WTC11 (cell line): ENCODE measurements at regions of chr6 and their contacts with region 1.

Region 1: DNA sequence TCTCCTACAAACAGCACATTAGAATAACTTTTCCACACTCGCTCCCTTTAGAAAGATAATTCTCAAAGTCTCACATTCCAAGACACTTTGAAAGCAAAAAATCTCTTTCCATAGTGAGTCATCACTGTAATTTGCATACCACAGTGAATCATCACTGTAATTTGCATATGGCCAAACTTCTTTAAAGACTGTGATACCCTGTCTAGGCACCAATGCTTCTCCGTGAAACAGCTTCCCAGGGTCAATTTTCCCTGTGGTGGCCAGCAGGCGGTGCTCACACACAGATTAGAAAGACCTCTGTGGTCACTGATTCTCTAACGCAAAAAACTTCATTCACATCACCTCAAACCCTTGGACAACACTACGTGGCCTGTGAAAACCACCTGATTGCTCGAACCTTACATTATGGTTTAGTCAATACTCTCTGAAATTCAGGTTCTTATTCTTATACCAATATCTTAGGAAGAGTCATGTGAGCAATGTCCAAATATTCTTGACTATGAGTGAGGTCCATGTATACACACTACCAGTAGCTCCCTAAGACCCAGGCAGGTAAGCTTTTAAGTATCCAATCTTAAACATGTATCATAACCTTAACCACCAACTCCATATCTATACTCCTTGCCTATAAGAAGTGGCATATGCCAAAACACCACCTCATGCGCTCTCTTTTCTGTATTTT is 78.5 kb upstream of the PHACTR1 start:
- DNase-seq: peak; percentile 79
- ATAC-seq: peak; percentile 93
- H3K4me3 Mint-ChIP-seq: no peak overlapping the region
- H3K27ac Mint-ChIP-seq: no peak overlapping the region
- H3K4me1 Mint-ChIP-seq: peaks cover 3% of the 10 kb centered on the region; the same call in 1 of the 2 replicates
- H3K27me3 Mint-ChIP-seq: no peaks in the 10 kb centered on the region; the same call in 1 of the 2 replicates
- CTCF ChIP-seq: peak; percentile 89

Region 2: GRCh38 chr6:12528581-12529363 is 109.3 kb before region 1 on chr6:
- CTCF ChIA-PET with region 1: no interaction called
- POLR2A ChIA-PET with region 1: no interaction called
- DNase-seq: no peak
- ATAC-seq: no peak
- H3K4me3 Mint-ChIP-seq: no peak overlapping the region
- H3K27ac Mint-ChIP-seq: no peak overlapping the region
- H3K4me1 Mint-ChIP-seq: peaks cover 21% of the 10 kb centered on the region
- H3K27me3 Mint-ChIP-seq: no peaks in the 10 kb centered on the region; the same call in 1 of the 2 replicates
- CTCF ChIP-seq: no peak

Region 3: GRCh38 chr6:12557765-12558164 is 80.3 kb before region 1 on chr6:
- CTCF ChIA-PET with region 1: no interaction called
- POLR2A ChIA-PET with region 1: no interaction called
- DNase-seq: no peak
- ATAC-seq: no peak
- H3K4me3 Mint-ChIP-seq: no peak overlapping the region
- H3K27ac Mint-ChIP-seq: no peak overlapping the region
- H3K4me1 Mint-ChIP-seq: no peaks in the 10 kb centered on the region
- H3K27me3 Mint-ChIP-seq: no peaks in the 10 kb centered on the region; the same call in 1 of the 2 replicates
- CTCF ChIP-seq: no peak

Region 4: DNA sequence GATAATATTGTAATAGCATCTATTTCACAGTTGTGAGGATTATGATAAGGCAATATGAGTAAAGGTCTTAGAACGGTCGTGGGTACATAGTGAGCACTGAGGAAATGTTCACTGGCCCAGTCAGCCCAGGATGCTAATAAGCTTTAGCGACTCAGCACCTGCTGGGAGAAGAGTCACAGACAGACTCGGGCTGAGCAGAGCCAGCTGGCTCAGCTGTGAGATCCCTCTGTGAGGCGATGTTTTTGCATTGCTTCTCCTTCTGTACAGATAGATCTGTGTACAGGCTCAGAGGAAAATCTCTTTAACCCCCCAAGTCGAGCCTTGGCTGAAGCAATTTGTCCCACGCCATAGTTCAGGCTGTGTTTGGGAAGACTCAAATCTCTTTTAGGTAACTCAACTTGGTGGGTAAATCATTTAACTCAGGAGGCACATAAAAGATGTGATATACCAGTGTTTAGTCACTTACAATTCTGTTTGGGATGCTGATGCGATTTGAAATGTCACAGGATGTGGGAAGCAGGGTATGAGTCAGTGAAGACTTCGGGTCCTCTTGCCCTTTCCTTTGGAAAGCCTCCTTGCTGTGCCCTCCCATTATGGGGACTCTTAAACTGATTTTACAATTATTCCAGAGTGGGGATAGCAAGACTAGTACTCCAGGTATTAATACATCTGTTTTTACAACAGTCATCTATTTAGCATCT is 131.6 kb after region 1 on chr6:
- CTCF ChIA-PET with region 1: no interaction called
- POLR2A ChIA-PET with region 1: no interaction called
- DNase-seq: no peak
- ATAC-seq: peak; percentile 39; the same call in 1 of the 2 replicates
- H3K4me3 Mint-ChIP-seq: no peak overlapping the region
- H3K27ac Mint-ChIP-seq: no peak overlapping the region
- H3K4me1 Mint-ChIP-seq: no peaks in the 10 kb centered on the region
- H3K27me3 Mint-ChIP-seq: no peaks in the 10 kb centered on the region
- CTCF ChIP-seq: no peak

Region 5: GRCh38 chr6:12899046-12899833 is 261.1 kb after region 1 on chr6:
- CTCF ChIA-PET with region 1: interaction called, 61 read pairs
- POLR2A ChIA-PET with region 1: no interaction called
- DNase-seq: no peak
- ATAC-seq: no peak
- H3K4me3 Mint-ChIP-seq: no peak overlapping the region
- H3K27ac Mint-ChIP-seq: no peak overlapping the region
- H3K4me1 Mint-ChIP-seq: no peaks in the 10 kb centered on the region
- H3K27me3 Mint-ChIP-seq: peaks cover 3% of the 10 kb centered on the region; the same call in 1 of the 2 replicates
- CTCF ChIP-seq: no peak

Region 6: DNA sequence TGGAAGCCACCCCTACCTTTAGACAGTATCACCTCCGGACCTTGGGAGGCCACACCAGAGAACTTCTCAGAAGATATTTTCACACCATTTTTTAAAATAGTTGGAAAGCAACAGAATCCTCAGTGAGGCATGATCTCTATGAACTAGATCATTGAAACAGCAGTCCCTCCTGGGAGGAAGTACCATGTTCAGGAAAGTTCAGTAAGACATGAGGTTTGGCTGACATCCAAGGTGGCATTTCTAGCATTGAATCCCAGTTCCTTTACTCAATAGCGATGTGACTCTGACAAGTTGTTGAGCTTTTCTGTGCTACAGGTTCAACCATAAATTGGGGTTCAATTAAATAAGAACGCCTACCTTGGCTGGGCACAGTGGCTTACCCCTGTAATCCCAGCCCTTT is 521.2 kb after region 1 on chr6:
- CTCF ChIA-PET with region 1: no interaction called
- POLR2A ChIA-PET with region 1: no interaction called
- DNase-seq: no peak
- ATAC-seq: no peak
- H3K4me3 Mint-ChIP-seq: no peak overlapping the region
- H3K27ac Mint-ChIP-seq: no peak overlapping the region
- H3K4me1 Mint-ChIP-seq: peaks cover 4% of the 10 kb centered on the region
- H3K27me3 Mint-ChIP-seq: no peaks in the 10 kb centered on the region
- CTCF ChIP-seq: no peak